Head of caudate nucleus (tissue), 42 donors: ENCODE measurements at regions of chr1 and their contacts with region 1.

Region 1: DNA sequence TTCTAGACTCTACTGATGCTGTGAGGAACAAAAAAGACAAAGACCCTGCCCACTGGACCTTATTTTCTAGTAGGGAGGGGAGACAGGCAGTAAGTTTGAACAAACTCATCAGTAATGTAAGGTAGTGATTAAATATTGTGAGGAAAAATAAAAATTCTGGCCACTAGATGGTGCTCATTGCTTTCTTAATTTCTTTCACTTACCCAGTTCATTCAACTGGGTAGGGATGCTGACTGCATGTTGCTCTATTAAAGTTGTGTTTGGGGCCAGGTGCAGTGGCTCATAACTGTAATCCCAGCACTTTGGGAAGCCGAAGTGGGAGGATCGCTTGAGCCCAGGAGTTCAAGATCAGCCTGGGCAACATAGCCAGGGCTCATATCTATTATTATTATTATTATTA is 6.3 kb upstream of the KYAT3 start:
- DNase-seq: peak in 10 of 42 donors; percentile 8 to 75 (median 32)

Region 2: DNA sequence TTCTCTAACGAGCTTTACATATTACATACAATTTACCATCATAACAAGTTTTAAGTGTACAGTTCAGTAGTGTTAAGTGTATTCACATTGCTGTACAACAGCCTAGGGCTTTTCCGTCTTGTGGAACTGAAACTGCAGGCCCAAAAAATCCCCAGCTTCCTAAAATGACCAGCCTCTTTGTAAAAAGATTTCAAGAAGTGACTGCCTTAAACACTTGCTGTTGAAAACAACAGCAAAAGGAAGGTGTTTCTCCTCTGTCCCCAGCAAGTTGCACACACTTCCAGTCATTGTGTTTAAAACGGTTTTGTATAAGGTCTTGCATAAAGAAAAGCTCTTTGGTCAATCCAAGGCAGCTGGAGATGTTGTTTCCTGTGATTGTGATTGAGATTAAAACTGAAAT is 82.3 kb after region 1 on chr1:
- intact Hi-C with region 1: no loop called
- DNase-seq: peak in 5 of 42 donors; percentile 3 to 21 (median 16)

Region 3: GRCh38 chr1:89358287-89358893 is 359.7 kb after region 1 on chr1:
- intact Hi-C with region 1: loop called (anchors 2 kb)
- DNase-seq: peak; percentile 35 to 91 (median 76)

Region 4: GRCh38 chr1:89454845-89455521 is 456.3 kb after region 1 on chr1:
- intact Hi-C with region 1: loop called (anchors 5 kb)
- DNase-seq: peak in 40 of 42 donors; percentile 2 to 77 (median 46)